ENCODE measurements at regions of chr19 and their contacts with region 1.

Region 1: GRCh38 chr19:43463381-43464136 is 1.8 kb downstream of the LYPD3 start:
- DNase-seq: peak; percentile 99 to 100
- ATAC-seq: peak; percentile 96
- H3K4me3 ChIP-seq: peak overlapping the region; percentile 14 to 42
- H3K27ac ChIP-seq: peak overlapping the region in 1 of 2 donors; percentile 78
- H3K4me1 ChIP-seq: no peaks in the 10 kb centered on the region
- H3K27me3 ChIP-seq: no peaks in the 10 kb centered on the region

Region 2: GRCh38 chr19:43474986-43475705 is 11.6 kb after region 1 on chr19:
- intact Hi-C with region 1: loop called in 1 of 2 experiments (anchors 1 kb)
- DNase-seq: peak; percentile 97 to 99
- ATAC-seq: peak; percentile 95
- H3K4me3 ChIP-seq: no peak overlapping the region
- H3K27ac ChIP-seq: peak overlapping the region in 1 of 2 donors; percentile 11
- H3K4me1 ChIP-seq: no peaks in the 10 kb centered on the region
- H3K27me3 ChIP-seq: no peaks in the 10 kb centered on the region

Region 3: DNA sequence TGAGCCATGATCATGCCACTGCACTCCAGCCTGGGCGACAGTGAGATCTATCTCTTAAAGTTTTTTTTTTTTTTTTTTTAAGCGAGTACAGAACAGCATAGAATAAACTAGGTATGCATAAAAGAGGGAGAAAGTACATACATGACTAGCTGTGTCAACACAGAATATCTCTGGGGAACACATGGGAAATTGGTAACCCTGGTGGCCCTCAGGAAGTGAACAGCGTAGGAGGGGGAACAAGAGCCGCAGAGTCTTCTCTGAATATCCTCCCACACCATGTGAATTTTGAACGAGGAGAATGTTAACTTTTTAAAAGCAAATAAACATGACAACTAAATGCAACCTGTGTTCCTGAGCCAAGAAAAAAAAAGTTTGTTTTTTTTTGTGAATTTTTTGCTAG is 25.8 kb after region 1 on chr19:
- intact Hi-C with region 1: no loop called
- DNase-seq: no peak
- ATAC-seq: no peak
- H3K4me3 ChIP-seq: no peak overlapping the region
- H3K27ac ChIP-seq: no peak overlapping the region
- H3K4me1 ChIP-seq: no peaks in the 10 kb centered on the region
- H3K27me3 ChIP-seq: no peaks in the 10 kb centered on the region

Region 4: DNA sequence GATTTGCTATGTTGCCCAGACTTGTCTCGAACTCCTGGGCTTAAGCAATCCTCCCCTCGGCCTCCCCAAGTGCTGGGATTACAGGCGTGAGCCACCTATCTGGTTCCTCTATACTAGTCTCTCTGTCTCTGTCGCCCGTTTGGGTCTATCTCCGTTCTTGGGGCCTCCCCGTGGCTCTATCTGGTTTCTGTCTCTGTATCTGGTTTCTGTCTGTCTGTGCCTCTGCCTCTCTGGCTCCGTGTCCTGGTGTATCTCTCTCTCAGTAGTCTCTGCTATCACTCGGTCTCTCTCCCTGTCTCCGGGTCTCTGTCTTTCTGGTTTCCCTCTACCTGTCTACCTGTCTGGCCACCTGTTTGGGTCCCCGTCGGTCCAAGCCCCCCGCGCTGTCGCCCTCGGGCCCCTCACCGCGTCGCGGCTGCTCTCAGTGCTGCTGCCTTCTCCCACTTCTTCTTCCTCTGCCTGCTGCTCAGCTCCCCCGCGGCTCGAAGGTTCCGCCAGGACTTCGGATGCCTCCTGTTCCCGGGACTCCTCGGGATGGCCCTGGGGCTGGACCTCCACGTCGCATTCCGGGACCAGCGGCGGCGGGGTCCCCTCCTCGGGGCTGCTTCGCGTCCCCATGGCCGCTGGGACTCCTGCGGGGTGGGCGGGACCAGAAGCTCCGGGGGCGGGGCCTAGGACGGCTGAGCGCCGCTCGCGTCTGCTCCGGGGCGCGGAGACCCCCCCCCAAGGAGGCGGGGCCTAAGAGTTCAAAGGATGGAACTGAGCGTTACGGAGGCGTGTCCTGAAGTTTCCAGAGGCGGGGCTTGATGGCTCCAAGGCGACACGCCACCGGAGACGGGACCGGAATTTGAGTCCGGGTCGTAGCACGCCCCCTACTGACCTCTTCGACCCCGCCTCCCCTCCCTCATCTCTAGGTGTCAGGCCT is 40.2 kb after region 1 on chr19:
- intact Hi-C with region 1: loop called (anchors 1 to 5 kb)
- DNase-seq: peak; percentile 98 to 100
- ATAC-seq: peak; percentile 99
- H3K4me3 ChIP-seq: peak overlapping the region; percentile 53 to 84
- H3K27ac ChIP-seq: peak overlapping the region in 1 of 2 donors; percentile 69
- H3K4me1 ChIP-seq: no peaks in the 10 kb centered on the region
- H3K27me3 ChIP-seq: no peaks in the 10 kb centered on the region

Region 5: GRCh38 chr19:43519436-43520088 is 56.0 kb after region 1 on chr19:
- intact Hi-C with region 1: loop called in 1 of 2 experiments (anchors 5 kb)
- DNase-seq: peak; percentile 83 to 90
- ATAC-seq: peak; percentile 89
- H3K4me3 ChIP-seq: no peak overlapping the region
- H3K27ac ChIP-seq: no peak overlapping the region
- H3K4me1 ChIP-seq: no peaks in the 10 kb centered on the region
- H3K27me3 ChIP-seq: no peaks in the 10 kb centered on the region

Region 6: DNA sequence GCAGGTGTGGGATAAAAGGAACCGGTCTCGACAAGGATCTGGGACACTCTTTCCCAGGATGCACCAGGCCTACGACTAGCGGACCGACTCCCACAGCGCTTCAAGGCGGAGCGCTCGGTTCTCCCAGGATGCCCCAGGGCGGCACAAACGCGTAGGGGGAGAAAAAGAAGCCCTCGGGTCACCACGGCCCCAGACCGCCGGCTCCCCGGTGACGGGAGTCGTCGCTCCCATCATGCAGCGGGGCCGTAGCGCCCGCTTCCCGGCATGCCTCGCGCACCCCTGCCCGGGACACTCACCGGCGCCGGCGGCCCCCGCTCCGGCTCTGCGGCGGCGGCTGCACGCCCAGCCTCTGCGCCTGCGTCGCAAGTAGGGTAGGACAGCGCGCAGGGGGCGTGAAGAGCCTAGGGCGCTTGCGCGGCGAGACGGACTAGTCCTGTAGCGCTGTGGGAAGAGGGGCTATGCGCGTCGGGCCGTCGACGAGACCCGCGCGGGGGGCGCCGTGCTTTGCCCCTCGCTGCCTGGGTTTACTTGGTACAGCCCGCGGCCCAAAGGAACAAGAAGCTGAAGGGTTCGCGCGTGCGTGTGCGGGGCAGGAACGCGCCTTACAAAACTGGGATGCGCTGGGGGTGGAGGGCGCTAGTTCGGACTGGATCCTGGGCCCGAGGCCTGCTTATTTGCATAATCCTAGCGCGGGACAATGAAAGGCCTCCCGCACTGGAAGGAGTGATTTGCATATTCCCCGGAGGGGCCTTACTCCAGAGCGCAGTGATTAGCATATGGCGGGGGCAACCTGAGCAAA is 155.9 kb after region 1 on chr19 and contains the start of gene ZNF428:
- intact Hi-C with region 1: no loop called
- DNase-seq: peak; percentile 92 to 94
- ATAC-seq: peak; percentile 93
- H3K4me3 ChIP-seq: peak within 1 kb of the TSS; percentile 43 to 52
- H3K27ac ChIP-seq: peak within 1 kb of the TSS; percentile 1 to 69
- H3K4me1 ChIP-seq: no peaks in the 10 kb centered on the region
- H3K27me3 ChIP-seq: no peaks in the 10 kb centered on the region
- total RNA-seq, gene ZNF428: 26.2 to 34.6 TPM